Transverse colon (tissue), 4 donors: ENCODE measurements at regions of chr6 and their contacts with region 1.

Region 1: DNA sequence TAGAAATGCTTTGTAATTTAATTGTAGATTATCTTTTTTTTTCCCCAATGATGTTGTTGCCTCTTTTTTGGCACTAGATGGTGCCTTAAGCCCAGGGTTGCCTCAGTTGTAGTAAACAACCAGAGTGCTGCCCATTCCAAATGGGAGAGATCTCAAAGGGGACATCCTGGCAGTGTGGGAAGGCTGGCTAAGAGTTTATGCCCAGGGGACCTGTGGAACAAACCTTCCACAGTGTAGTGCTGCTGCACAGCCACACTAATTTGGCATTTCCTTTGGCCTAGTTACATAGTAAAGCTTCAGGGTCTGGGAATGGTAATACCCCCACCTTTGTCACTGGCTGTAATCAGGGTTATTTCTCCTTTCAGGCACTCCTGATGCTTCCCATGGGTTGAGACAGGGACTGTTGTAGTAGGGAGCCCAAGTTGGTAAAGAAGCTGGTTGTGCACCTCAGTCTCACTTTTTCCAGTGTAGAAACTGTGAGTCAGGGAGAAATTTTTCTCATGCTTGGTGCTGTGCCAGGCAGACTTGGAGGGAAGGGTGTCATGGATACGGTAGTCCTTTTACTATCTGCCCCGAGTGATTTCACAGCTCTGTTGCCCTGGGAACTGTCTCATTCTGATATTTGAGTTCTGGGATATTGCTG is 177.8 kb upstream of the ECI2 start:
- DNase-seq: peak; percentile 70
- H3K4me3 ChIP-seq: no peak overlapping the region
- H3K27ac ChIP-seq: peak overlapping the region; percentile 45 to 73 (median 62)
- H3K4me1 ChIP-seq: peaks cover 5 to 24% (median 20%) of the 10 kb centered on the region in 4 donors
- H3K27me3 ChIP-seq: no peaks in the 10 kb centered on the region
- CTCF ChIP-seq: peak; percentile 28 to 55 (median 43)
- EP300 ChIP-seq: no peak
- POLR2A ChIP-seq: no peak

Region 2: DNA sequence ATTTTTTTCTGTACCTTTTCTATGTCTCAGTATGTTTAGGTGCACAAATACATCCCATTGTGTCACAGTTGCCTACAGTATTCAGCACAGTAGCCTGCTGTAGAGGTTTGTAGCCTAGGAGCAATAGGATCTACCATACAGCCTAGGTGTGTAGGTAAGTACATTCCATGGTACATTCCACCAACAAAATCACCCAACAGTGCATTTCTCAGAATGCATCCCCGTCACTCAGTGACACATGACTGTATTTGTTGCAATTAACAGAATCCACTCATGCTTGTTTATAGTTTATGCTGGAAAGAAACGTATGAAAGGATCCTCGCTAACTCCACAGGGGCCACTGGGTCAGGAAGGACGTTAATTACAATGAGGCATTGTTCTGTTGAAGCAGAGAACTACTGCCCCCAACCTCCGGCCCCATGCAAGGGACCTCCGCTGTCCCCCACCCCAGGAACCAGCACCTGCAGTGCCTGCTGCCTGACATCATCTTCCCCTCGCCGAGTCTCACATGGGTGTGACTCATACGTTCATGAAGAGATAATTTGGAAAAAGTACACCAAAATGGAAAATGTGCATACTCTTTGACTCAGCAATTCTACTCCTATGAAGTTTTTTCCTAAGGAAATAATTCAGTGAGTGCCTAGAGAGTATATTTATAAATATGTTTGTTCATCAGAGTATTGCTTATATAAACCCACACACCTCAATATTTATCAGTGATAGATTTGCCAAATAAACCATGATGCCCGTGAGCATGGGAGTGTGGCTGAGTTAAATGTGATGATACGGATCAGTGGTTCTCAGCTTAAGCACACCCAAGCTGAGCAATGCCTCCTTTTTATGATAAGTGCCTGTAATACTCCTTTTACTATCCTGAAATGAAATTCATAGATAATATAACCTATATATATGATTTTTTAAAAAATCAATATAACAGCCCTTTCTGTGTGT is 21.4 kb before region 1 on chr6:
- in situ Hi-C with region 1: no loop called
- intact Hi-C with region 1: no loop called
- DNase-seq: no peak
- H3K4me3 ChIP-seq: no peak overlapping the region
- H3K27ac ChIP-seq: no peak overlapping the region
- H3K4me1 ChIP-seq: peaks cover 0 to 4% (median 0%) of the 10 kb centered on the region in 4 donors
- H3K27me3 ChIP-seq: peaks cover 3% of the 10 kb centered on the region
- CTCF ChIP-seq: no peak
- EP300 ChIP-seq: no peak
- POLR2A ChIP-seq: no peak

Region 3: GRCh38 chr6:4775584-4776494 is 462.7 kb after region 1 on chr6 and contains the start of gene CDYL:
- in situ Hi-C with region 1: loop called in 1 of 4 experiments (anchors 25 kb)
- intact Hi-C with region 1: no loop called
- DNase-seq: peak; percentile 92
- H3K4me3 ChIP-seq: peak within 1 kb of the TSS; percentile 61 to 87 (median 74)
- H3K27ac ChIP-seq: peak within 1 kb of the TSS; percentile 90 to 93 (median 92)
- H3K4me1 ChIP-seq: peaks cover 9 to 24% (median 15%) of the 10 kb centered on the region in 4 donors
- H3K27me3 ChIP-seq: no peaks in the 10 kb centered on the region
- CTCF ChIP-seq: peak in 4 of 5 experiments; percentile 26 to 52 (median 34)
- EP300 ChIP-seq: no peak
- POLR2A ChIP-seq: peak; percentile 6
- total RNA-seq, gene CDYL: 23.6 to 40.8 (median 30.0) TPM

Region 4: GRCh38 chr6:4941782-4942672 is 628.9 kb after region 1 on chr6:
- in situ Hi-C with region 1: loop called in 1 of 4 experiments (anchors 25 kb)
- intact Hi-C with region 1: no loop called
- DNase-seq: no peak
- H3K4me3 ChIP-seq: no peak overlapping the region
- H3K27ac ChIP-seq: no peak overlapping the region
- H3K4me1 ChIP-seq: peaks cover 0 to 17% (median 10%) of the 10 kb centered on the region in 4 donors
- H3K27me3 ChIP-seq: no peaks in the 10 kb centered on the region
- CTCF ChIP-seq: no peak
- EP300 ChIP-seq: no peak
- POLR2A ChIP-seq: no peak